CD8-positive, alpha-beta memory T cell (primary cell): ENCODE measurements at regions of chrX and their contacts with region 1.

Region 1: GRCh38 chrX:109856974-109857373 is 123.9 kb upstream of the ACSL4 start:
- DNase-seq: peak in 2 of 5 donors; percentile 15 to 28
- H3K4me3 ChIP-seq: no peak overlapping the region
- H3K4me3 Mint-ChIP-seq: no peak overlapping the region
- H3K27ac ChIP-seq: no peak overlapping the region
- H3K27ac Mint-ChIP-seq: no peak overlapping the region
- H3K4me1 ChIP-seq: no peaks in the 10 kb centered on the region
- H3K4me1 Mint-ChIP-seq: peaks cover 0 to 5% (median 4%) of the 10 kb centered on the region in 3 donors
- H3K27me3 ChIP-seq: no peaks in the 10 kb centered on the region
- H3K27me3 Mint-ChIP-seq: peaks cover 3 to 4% of the 10 kb centered on the region in 2 donors

Region 2: GRCh38 chrX:109709129-109709631 is 147.8 kb before region 1 on chrX:
- CTCF ChIA-PET with region 1: interaction called, 95 read pairs
- POLR2A ChIA-PET with region 1: no interaction called
- DNase-seq: no peak
- H3K4me3 ChIP-seq: no peak overlapping the region
- H3K4me3 Mint-ChIP-seq: peak overlapping the region in 6 of 7 donors; percentile 25 to 74 (median 35)
- H3K27ac ChIP-seq: no peak overlapping the region
- H3K27ac Mint-ChIP-seq: peak overlapping the region in 7 of 8 donors; percentile 3 to 81 (median 67)
- H3K4me1 ChIP-seq: peaks cover 15% of the 10 kb centered on the region
- H3K4me1 Mint-ChIP-seq: peaks cover 37 to 82% (median 66%) of the 10 kb centered on the region in 3 donors
- H3K27me3 ChIP-seq: no peaks in the 10 kb centered on the region
- H3K27me3 Mint-ChIP-seq: peaks cover 0 to 1% of the 10 kb centered on the region in 2 donors

Region 3: DNA sequence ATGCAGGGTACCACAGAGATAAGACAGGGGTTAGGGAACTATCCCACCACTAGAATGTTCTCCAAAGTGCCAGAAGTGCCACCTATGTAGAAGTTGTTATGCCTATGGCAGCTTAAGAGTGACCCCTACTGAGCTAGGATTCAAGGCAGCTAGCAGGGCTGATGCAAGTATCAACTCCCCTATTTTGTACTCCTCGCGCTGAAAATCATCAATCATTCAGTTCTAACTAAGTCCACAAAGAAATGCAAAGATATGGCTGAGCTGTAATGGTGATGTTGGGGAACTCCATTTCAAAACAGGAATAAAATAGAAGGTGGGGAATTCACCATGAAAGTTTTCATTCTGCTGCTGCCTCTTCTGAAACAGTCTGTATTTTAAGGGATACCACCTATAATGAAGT is 137.7 kb before region 1 on chrX:
- CTCF ChIA-PET with region 1: interaction called, 95 read pairs
- POLR2A ChIA-PET with region 1: no interaction called
- DNase-seq: no peak
- H3K4me3 ChIP-seq: no peak overlapping the region
- H3K4me3 Mint-ChIP-seq: no peak overlapping the region
- H3K27ac ChIP-seq: no peak overlapping the region
- H3K27ac Mint-ChIP-seq: no peak overlapping the region
- H3K4me1 ChIP-seq: no peaks in the 10 kb centered on the region
- H3K4me1 Mint-ChIP-seq: peaks cover 20 to 68% (median 54%) of the 10 kb centered on the region in 3 donors
- H3K27me3 ChIP-seq: no peaks in the 10 kb centered on the region
- H3K27me3 Mint-ChIP-seq: no peaks in the 10 kb centered on the region

Region 4: DNA sequence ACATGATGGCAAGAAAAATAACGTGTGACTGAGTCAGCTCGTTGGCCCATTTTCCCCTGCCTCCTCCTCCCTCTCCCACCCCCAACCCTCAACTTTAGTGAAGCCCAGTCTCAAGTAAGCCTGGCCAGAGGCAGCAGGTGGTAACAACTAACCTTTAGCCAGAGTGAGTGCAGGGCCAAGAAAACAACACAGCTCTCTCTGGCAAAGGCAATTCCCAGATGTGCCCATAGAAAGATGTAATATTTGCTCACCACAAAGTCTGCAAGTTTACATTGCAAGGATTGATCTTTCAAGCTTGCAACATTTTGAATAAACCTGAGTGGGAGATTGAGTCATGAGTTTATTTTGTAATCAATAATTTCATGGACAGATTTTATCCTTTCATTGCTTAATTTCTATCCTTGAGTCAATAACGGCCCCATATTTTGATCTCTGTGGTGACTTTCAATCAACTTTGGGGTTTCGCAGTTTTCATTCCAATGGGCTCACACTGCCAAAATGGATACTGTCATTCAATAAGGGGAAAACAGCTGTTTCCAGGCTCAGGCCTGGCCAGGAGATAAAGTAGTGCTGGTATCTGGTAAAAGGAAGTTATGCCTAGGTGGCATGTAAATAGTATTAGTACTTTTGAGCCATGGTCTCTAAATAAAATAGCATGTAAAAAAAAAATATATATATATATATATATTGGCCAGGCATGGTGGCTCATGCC is 15.2 kb after region 1 on chrX:
- CTCF ChIA-PET with region 1: no interaction called
- POLR2A ChIA-PET with region 1: no interaction called
- DNase-seq: no peak
- H3K4me3 ChIP-seq: no peak overlapping the region
- H3K4me3 Mint-ChIP-seq: no peak overlapping the region
- H3K27ac ChIP-seq: no peak overlapping the region
- H3K27ac Mint-ChIP-seq: no peak overlapping the region
- H3K4me1 ChIP-seq: no peaks in the 10 kb centered on the region
- H3K4me1 Mint-ChIP-seq: no peaks in the 10 kb centered on the region
- H3K27me3 ChIP-seq: no peaks in the 10 kb centered on the region
- H3K27me3 Mint-ChIP-seq: no peaks in the 10 kb centered on the region